Motor neuron (in vitro differentiated cells): ENCODE measurements at regions of chr18 and their contacts with region 1.

Region 1: DNA sequence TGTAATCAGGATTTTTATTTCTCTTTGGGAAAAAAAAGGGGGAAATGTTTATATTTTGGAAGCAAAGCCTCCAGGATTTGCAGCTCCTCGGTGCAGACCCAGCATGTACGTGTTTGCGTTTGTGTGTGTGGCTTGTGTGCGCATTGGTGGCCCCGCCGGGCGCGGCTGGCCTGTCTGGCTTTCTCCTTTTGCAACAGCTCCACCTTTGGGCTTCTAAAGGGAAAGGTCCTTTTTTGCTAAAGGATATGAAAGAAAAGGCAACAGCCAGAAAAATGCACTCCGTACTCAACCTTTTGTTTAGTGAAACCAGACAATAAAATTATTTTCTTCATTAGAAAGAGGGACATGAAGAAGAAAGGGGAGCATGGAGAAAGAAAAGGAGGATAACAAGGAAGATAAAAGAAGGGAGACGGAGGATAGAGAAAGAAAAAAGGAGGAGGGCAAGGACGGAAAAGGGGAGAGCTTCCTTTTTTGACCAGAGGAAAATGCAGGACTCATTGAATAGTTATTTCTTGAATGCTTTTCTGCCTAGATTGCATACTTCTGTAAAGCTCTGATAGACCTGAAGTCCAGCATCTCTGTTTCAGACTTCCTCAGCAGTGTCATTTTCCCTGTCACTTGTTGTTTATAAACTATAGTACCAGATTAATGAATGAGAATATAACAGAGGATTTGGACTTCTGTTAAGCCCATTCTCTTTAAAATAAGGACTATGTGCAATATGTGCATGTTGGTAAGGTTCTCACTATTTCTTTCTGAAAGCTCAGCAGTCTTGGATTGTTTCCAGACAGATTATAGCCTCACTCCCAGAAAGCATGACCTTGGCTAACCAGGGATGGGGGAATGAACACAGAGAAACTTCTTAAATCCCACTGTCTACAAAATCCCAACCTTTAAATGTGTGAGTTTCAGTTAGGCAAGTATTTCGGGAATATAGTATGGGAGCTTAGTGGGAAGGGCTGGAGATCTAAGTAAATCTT is 563.1 kb upstream of the PIK3C3 start:
- ATAC-seq: peak; percentile 74 to 98 (median 97)
- H3K4me3 ChIP-seq: peak overlapping the region in 1 of 5 donors; percentile 13
- H3K27ac ChIP-seq: no peak overlapping the region
- H3K4me1 ChIP-seq: peaks cover 21 to 30% of the 10 kb centered on the region in 2 donors

Region 2: DNA sequence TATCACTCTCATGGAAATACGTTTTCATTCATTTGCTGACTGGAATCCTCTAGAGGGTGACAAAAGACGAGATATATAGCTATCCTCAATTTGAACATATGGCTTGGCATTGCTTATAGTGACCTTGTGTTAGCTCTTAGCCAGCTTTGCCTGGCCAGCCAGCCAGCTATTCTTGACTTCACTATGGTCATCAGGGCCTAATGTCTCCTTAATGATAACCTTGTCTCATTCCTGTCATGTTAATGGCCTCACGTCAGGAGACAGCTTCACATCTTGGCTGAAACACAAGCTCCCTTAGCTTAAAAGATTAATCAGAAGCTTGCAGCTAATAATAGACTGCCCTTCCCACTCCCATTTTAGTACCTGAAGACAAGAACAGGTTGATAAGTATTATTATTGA is 954.4 kb before region 1 on chr18:
- in situ Hi-C with region 1: loop called in 1 of 9 experiments (anchors 25 kb)
- ATAC-seq: peak in 5 of 8 experiments; percentile 60 to 98 (median 97)
- H3K4me3 ChIP-seq: no peak overlapping the region
- H3K27ac ChIP-seq: no peak overlapping the region
- H3K4me1 ChIP-seq: peaks cover 0 to 21% of the 10 kb centered on the region in 2 donors

Region 3: DNA sequence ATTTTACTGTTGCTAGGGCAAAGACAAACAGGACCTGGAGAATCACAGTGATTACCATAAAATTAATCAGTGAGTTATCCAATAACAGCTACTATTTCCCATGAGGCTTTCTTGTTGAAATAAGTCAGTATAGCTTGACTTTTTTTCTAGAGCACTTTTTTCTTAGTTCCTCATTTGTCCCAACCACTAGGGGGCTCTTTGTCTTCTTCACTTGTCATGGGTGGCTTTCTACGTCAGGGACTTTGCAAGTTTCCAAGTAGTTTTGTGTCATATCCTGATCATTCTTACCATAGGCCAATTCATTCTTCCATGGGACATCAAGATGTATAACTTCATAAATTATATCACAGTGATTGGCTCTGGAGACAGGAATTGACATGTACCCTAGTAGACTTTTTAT is 456.5 kb before region 1 on chr18:
- in situ Hi-C with region 1: loop called in 1 of 9 experiments (anchors 25 kb)
- ATAC-seq: no peak
- H3K4me3 ChIP-seq: no peak overlapping the region
- H3K27ac ChIP-seq: no peak overlapping the region
- H3K4me1 ChIP-seq: peaks cover 16 to 20% of the 10 kb centered on the region in 2 donors